ENCODE measurements at regions of chr17 and their contacts with region 1.

Region 1: DNA sequence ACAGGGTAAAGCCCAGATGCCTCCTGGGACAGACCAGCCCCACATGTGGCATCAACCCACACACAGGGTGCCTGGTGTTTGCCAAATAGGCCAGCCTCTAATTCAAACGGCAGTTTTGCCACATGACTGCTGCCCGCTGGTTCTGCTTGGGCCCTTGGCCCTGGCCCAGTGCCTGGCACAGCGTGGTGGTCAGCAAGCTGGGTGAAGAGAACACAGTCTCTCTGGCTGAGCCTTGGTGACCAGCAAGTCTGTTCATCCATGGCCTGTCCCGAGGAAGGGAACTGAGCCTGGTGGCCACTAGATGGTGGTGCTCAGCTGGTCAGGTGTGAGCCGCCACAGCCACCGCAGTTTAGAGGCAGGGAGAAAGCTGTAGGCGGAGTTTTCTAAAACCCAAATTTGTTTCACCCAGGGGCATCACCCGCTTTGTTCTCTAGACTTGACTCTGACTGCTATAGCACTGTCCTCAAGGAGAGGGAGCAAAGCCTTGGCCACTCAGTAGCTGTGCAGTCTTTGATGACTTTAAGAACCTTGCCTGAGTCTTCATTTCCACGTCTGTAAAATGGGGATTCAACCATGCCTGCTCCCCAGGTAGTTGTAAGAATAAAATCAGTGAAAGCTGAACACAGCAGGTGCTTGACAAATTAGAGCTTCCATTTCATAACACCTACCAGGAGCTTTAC is 4.7 kb upstream of the GFAP start:
- DNase-seq: peak; percentile 85 to 91 (median 87)
- H3K4me3 ChIP-seq: no peak overlapping the region
- H3K27ac ChIP-seq: no peak overlapping the region
- H3K4me1 ChIP-seq: no peaks in the 10 kb centered on the region
- H3K27me3 ChIP-seq: no peaks in the 10 kb centered on the region
- CTCF ChIP-seq: peak; percentile 81

Region 2: GRCh38 chr17:44864866-44865660 is 55.0 kb before region 1 on chr17:
- intact Hi-C with region 1: no loop called
- DNase-seq: peak in 4 of 5 donors; percentile 73 to 88 (median 79)
- H3K4me3 ChIP-seq: no peak overlapping the region
- H3K27ac ChIP-seq: no peak overlapping the region
- H3K4me1 ChIP-seq: no peaks in the 10 kb centered on the region
- H3K27me3 ChIP-seq: no peaks in the 10 kb centered on the region
- CTCF ChIP-seq: peak; percentile 78

Region 3: DNA sequence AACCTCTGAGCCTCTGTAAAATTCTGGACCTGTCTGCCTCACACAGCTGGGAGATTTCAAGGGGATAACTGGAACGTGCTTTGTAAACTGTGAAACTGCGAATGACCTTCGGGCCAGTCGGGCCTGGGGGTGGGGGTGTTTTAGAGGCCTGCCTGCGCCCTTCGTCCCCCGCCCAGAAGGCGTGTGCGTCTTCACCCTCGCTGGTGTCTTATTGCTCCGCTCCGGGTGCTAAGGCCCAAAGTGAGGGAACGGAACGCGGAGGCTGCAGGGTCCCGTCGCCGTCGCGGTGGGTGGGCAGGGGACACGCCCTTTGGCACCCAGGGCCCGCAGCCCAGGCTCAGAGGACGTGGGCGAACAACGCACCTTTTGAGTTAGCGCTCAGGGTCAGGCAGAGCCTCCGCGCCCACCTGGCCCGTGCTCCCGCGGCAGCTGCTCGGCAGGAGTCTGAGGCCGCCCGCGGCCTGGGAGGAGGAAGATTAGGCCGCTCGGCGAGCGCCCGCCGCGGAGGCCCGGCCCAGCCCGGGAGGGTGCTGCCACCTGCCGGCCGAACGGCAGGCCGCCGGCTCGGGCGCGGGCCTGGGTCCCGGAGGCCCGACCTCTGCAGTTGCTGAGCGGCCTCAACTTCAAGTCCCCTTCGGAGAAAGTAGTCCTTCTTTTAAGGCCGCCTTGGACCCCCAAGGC is 101.7 kb after region 1 on chr17:
- intact Hi-C with region 1: loop called (anchors 5 kb)
- DNase-seq: peak; percentile 73 to 90 (median 82)
- H3K4me3 ChIP-seq: peak overlapping the region in 2 of 3 donors; percentile 39 to 59
- H3K27ac ChIP-seq: no peak overlapping the region
- H3K4me1 ChIP-seq: peaks cover 5 to 14% (median 13%) of the 10 kb centered on the region in 3 donors
- H3K27me3 ChIP-seq: no peaks in the 10 kb centered on the region
- CTCF ChIP-seq: peak; percentile 75

Region 4: GRCh38 chr17:45110668-45111611 is 190.9 kb after region 1 on chr17:
- intact Hi-C with region 1: loop called (anchors 10 kb)
- DNase-seq: peak in 3 of 5 donors; percentile 29 to 37 (median 30)
- H3K4me3 ChIP-seq: no peak overlapping the region
- H3K27ac ChIP-seq: no peak overlapping the region
- H3K4me1 ChIP-seq: peaks cover 0 to 5% (median 0%) of the 10 kb centered on the region in 3 donors
- H3K27me3 ChIP-seq: no peaks in the 10 kb centered on the region
- CTCF ChIP-seq: no peak